Activated T-helper 1 cell treated with anti-CD3 and anti-CD28 coated beads, Interleukin-12 subunit alpha, Interleukin-12 subunit beta, Interleukin-2, Interleukin-4 antibody, amounts not matched to agents 30 ng/mL and 10 ng/mL and 1 ng/mL, durations not matched to agents 14 hours and 24 hours and 36 hours (primary cell): ENCODE measurements at regions of chr2 and their contacts with region 1.

Region 1: GRCh38 chr2:215311625-215312396 is at the start of gene ATIC:
- DNase-seq: peak; percentile 90
- H3K4me3 Mint-ChIP-seq: peak within 1 kb of the TSS; percentile 97
- H3K27ac Mint-ChIP-seq: peak within 1 kb of the TSS; percentile 95
- H3K4me1 Mint-ChIP-seq: peaks cover 33% of the 10 kb centered on the region
- H3K27me3 Mint-ChIP-seq: no peaks in the 10 kb centered on the region
- total RNA-seq, gene ATIC: 287 and 299 TPM in 2 replicates

Region 2: GRCh38 chr2:214881647-214882202 is 430.1 kb before region 1 on chr2:
- intact Hi-C with region 1: no loop called
- DNase-seq: no peak
- H3K4me3 Mint-ChIP-seq: no peak overlapping the region
- H3K27ac Mint-ChIP-seq: no peak overlapping the region
- H3K4me1 Mint-ChIP-seq: no peaks in the 10 kb centered on the region
- H3K27me3 Mint-ChIP-seq: peaks cover 4% of the 10 kb centered on the region

Region 3: GRCh38 chr2:215269397-215270119 is 42.3 kb before region 1 on chr2:
- intact Hi-C with region 1: loop called (anchors 5 kb)
- DNase-seq: peak; percentile 25
- H3K4me3 Mint-ChIP-seq: no peak overlapping the region
- H3K27ac Mint-ChIP-seq: no peak overlapping the region
- H3K4me1 Mint-ChIP-seq: peaks cover 7% of the 10 kb centered on the region
- H3K27me3 Mint-ChIP-seq: peaks cover 4% of the 10 kb centered on the region

Region 4: DNA sequence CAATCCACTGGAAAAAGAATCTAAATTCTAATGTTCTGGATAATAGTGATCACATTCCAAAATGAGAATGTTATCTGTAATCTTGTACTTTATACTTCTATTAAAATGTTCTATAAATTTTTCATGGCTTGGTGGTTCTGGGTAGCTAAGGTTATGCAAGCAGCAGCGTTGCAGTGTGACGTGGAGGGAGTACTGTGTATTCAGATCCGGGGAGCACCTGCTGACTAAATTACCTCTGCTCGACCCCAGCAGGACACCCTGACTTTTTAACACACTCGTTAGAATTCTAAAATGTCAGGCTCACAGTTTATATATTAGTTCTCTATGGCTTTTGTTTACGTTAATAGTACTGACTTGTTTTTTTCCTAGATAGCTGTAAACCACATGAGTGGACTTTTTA is 13.0 kb after region 1 on chr2:
- intact Hi-C with region 1: no loop called
- DNase-seq: no peak
- H3K4me3 Mint-ChIP-seq: no peak overlapping the region
- H3K27ac Mint-ChIP-seq: no peak overlapping the region
- H3K4me1 Mint-ChIP-seq: peaks cover 30% of the 10 kb centered on the region
- H3K27me3 Mint-ChIP-seq: no peaks in the 10 kb centered on the region

Region 5: GRCh38 chr2:215410932-215411285 is 99.1 kb after region 1 on chr2:
- intact Hi-C with region 1: loop called (anchors 5 kb)
- DNase-seq: no peak
- H3K4me3 Mint-ChIP-seq: no peak overlapping the region
- H3K27ac Mint-ChIP-seq: no peak overlapping the region
- H3K4me1 Mint-ChIP-seq: peaks cover 24% of the 10 kb centered on the region
- H3K27me3 Mint-ChIP-seq: peaks cover 11% of the 10 kb centered on the region

Region 6: DNA sequence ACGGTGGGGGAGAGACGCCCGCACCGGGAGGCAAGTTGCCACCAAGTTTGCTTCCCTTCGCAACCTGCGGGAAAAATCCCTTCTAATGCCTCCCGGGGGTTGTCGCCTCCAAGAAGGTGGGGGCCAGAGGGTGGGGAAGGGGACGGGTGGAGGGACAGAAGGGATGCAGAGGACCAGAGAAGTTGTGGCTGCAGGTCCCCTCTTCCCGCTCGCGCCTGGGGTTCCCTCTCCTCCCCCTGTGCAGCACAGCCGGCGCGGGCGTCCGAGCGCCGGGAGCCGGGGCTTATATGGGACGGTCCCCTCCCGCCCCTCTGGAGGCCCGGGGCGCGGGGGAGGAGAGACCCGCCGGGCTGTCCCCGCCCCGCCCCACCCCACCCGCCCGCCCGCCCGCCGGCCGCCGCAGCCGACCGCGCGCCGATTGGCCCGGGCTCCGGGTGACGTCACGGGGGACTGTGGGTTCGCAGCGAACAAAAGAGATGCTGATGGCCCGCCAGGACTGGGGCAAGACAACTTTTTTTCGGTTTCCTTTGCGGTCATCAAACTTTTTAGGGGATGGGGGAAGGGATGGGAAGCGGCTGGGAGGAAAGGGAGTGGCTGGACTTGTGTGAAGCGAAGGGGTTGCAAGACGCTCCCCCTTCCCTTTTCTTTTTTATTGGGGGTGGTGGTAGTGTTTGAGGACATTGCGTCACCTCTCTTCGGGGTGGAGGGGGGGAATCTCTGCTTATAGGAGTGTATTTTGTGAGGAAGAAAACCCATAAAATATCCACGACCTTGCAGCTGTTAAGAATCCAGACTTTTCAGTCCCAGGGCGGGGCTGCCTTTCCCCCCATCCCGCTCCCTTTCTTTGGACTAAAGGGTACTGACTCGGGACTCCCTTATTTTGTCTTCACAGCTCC is 124.2 kb after region 1 on chr2 and contains the start of gene FN1:
- intact Hi-C with region 1: loop called (anchors 2 kb)
- DNase-seq: peak; percentile 54
- H3K4me3 Mint-ChIP-seq: peak within 1 kb of the TSS; percentile 85
- H3K27ac Mint-ChIP-seq: peak within 1 kb of the TSS; percentile 7
- H3K4me1 Mint-ChIP-seq: peaks cover 11% of the 10 kb centered on the region
- H3K27me3 Mint-ChIP-seq: peaks cover 73% of the 10 kb centered on the region
- total RNA-seq, gene FN1: 1.6 and 2.7 TPM in 2 replicates

Region 7: DNA sequence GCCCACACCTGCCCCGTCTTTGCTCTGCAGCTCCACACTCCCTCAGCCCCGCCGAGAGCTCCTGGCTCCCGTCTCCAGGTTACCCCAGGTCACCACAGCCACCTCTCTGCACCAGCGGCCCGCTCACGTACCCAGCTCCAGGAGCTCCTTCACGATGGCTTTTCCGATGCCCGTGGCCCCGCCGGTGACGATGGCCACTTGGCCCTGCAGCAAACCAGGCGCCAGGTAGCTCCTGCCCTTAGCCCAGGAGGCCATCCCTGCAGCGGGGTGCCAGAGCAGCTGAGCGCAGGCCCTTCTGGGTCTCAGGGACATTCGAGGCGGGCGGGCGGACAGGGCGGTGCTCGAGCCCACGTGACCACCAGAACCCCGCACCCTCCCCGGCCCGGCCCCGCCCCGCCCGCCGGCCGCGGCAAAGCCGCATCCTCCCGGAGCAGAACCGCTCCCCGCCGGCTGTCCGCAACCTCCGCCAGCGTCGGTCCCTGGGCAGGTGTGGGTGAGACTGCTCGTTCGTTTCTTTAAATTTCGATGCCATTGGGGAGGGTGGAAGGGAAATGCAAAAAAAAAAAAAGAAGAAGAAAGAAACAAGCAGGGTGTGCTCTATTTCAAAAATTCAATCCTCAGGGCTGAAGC is 769.8 kb after region 1 on chr2 and contains the starts of genes PECR and TMEM169:
- intact Hi-C with region 1: loop called (anchors 5 kb)
- DNase-seq: peak; percentile 74
- H3K4me3 Mint-ChIP-seq: peak within 1 kb of the TSS; percentile 99
- H3K27ac Mint-ChIP-seq: peak within 1 kb of the TSS; percentile 84
- H3K4me1 Mint-ChIP-seq: peaks cover 49% of the 10 kb centered on the region
- H3K27me3 Mint-ChIP-seq: no peaks in the 10 kb centered on the region
- total RNA-seq, gene PECR: 14.0 and 17.6 TPM in 2 replicates
- total RNA-seq, gene TMEM169: 0.93 and 2.2 TPM in 2 replicates